Activated CD4-positive, alpha-beta T cell treated with anti-CD3 and anti-CD28 coated beads for 36 hours (primary cell): ENCODE measurements at regions of chr3 and their contacts with region 1.

Region 1: GRCh38 chr3:183188895-183189462 is 26.4 kb upstream of the LAMP3 start:
- DNase-seq: peak; percentile 56
- ATAC-seq: peak; percentile 33
- H3K4me3 Mint-ChIP-seq: no peak overlapping the region
- H3K27ac Mint-ChIP-seq: no peak overlapping the region
- H3K4me1 Mint-ChIP-seq: peaks cover 20% of the 10 kb centered on the region
- H3K27me3 Mint-ChIP-seq: no peaks in the 10 kb centered on the region

Region 2: GRCh38 chr3:183044547-183045229 is 144.3 kb before region 1 on chr3:
- CTCF ChIA-PET with region 1: no interaction called
- POLR2A ChIA-PET with region 1: no interaction called
- intact Hi-C with region 1: no loop called
- DNase-seq: no peak
- ATAC-seq: no peak
- H3K4me3 Mint-ChIP-seq: no peak overlapping the region
- H3K27ac Mint-ChIP-seq: no peak overlapping the region
- H3K4me1 Mint-ChIP-seq: no peaks in the 10 kb centered on the region
- H3K27me3 Mint-ChIP-seq: no peaks in the 10 kb centered on the region

Region 3: GRCh38 chr3:183122257-183122932 is 66.6 kb before region 1 on chr3:
- CTCF ChIA-PET with region 1: interaction called, 52 read pairs
- POLR2A ChIA-PET with region 1: no interaction called
- intact Hi-C with region 1: loop called (anchors 1 kb)
- DNase-seq: no peak
- ATAC-seq: peak; percentile 74
- H3K4me3 Mint-ChIP-seq: no peak overlapping the region
- H3K27ac Mint-ChIP-seq: no peak overlapping the region
- H3K4me1 Mint-ChIP-seq: peaks cover 10% of the 10 kb centered on the region
- H3K27me3 Mint-ChIP-seq: peaks cover 4% of the 10 kb centered on the region

Region 4: GRCh38 chr3:183252973-183253901 is 64.3 kb after region 1 on chr3 and contains the start of gene B3GNT5:
- CTCF ChIA-PET with region 1: interaction called, 11 read pairs
- POLR2A ChIA-PET with region 1: no interaction called
- intact Hi-C with region 1: loop called in 1 of 2 experiments (anchors 2 kb)
- DNase-seq: peak; percentile 76
- ATAC-seq: peak; percentile 56
- H3K4me3 Mint-ChIP-seq: peak within 1 kb of the TSS; percentile 77
- H3K27ac Mint-ChIP-seq: peak within 1 kb of the TSS; percentile 79
- H3K4me1 Mint-ChIP-seq: peaks cover 29% of the 10 kb centered on the region
- H3K27me3 Mint-ChIP-seq: peaks cover 14% of the 10 kb centered on the region
- total RNA-seq, gene B3GNT5: 20.2 to 22.8 TPM

Region 5: DNA sequence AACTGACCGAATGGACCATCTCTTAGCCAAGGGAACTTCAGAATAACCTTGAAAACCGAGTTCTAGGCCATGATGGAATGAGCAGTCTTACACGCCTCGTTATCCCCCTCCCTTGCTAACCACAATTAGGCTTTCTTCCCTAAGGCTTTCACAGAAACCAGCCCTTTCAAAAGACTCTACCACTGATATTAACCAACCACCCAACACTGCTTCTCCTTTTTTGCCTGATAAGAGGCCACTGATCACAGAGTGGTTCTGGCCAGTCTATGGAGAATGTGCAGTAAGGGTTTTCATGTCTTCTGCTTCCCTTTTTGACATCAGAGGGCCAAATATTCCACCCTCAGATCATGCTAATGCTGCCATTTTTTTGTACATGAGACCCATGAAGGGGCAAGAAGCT is 180.1 kb after region 1 on chr3:
- CTCF ChIA-PET with region 1: interaction called, 20 read pairs
- POLR2A ChIA-PET with region 1: no interaction called
- intact Hi-C with region 1: no loop called
- DNase-seq: no peak
- ATAC-seq: no peak
- H3K4me3 Mint-ChIP-seq: no peak overlapping the region
- H3K27ac Mint-ChIP-seq: no peak overlapping the region
- H3K4me1 Mint-ChIP-seq: peaks cover 34% of the 10 kb centered on the region
- H3K27me3 Mint-ChIP-seq: no peaks in the 10 kb centered on the region

Region 6: DNA sequence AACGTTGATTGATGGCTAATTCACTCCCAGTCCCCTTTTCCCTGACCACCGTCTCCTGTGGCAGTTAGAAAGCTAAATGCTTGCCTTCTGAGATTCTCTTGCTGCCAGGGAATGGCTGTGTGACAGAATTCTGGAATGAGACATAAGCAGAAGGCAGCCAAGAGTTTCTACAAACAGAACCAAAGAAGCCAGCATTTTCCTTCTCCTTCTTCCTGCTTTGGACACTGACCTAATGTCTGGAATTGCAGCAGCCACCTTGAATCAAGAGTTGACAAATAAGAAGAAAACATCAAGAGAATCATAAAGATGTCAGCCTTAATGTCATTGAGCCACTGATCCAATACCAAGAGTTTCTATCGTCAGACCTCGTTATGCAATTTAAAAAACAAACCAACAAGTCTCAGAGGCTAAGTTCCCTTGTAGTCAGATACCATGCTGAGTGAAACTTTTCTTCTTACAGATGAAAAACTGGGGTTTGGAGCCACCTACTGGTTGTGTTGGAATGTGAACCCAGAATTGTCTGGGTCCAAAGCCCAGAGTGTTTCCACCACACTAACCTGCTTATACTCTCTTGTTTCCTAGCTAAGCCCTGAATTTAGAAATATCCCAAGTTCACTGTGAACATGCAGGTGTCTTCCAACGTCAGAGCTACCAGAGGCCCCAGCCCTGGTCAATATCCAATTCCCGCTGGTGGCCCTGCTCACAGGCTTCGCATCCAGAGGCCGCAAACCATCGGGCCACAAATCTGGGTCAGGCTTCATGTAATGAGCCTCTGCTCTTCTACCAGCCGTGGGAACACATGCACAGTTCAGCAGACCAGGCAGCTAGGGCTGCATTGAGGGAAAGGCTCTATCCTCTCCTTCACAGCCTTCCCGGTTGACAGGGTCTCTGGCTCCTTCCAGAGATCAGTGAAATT is 197.0 kb after region 1 on chr3:
- CTCF ChIA-PET with region 1: interaction called, 257 read pairs
- POLR2A ChIA-PET with region 1: no interaction called
- intact Hi-C with region 1: loop called (anchors 1 kb)
- DNase-seq: peak; percentile 74
- ATAC-seq: peak; percentile 80
- H3K4me3 Mint-ChIP-seq: no peak overlapping the region
- H3K27ac Mint-ChIP-seq: no peak overlapping the region
- H3K4me1 Mint-ChIP-seq: peaks cover 14% of the 10 kb centered on the region
- H3K27me3 Mint-ChIP-seq: no peaks in the 10 kb centered on the region

Region 7: DNA sequence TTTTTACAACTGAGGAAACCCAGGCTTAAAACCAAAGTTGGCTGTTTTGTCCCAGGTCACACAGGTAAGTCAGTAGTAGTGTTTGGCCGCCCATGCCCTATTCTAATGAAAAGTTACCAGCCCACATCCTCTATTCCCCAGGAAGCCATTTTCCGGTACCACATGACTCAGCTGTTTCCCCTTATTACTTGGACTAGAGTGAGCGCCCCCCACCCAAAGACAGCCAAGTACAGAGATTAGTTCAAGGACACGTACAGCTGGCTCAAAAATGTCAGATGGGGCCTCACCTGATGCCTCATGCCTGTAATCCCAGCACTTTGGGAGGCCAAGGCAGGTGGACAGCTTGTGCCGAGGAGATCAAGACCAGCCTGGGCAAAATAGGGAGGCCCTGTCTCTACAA is 375.1 kb after region 1 on chr3:
- CTCF ChIA-PET with region 1: no interaction called
- POLR2A ChIA-PET with region 1: no interaction called
- intact Hi-C with region 1: no loop called
- DNase-seq: peak; percentile 45
- ATAC-seq: peak; percentile 72
- H3K4me3 Mint-ChIP-seq: no peak overlapping the region
- H3K27ac Mint-ChIP-seq: peak overlapping the region; percentile 9
- H3K4me1 Mint-ChIP-seq: peaks cover 9% of the 10 kb centered on the region
- H3K27me3 Mint-ChIP-seq: no peaks in the 10 kb centered on the region

Region 8: DNA sequence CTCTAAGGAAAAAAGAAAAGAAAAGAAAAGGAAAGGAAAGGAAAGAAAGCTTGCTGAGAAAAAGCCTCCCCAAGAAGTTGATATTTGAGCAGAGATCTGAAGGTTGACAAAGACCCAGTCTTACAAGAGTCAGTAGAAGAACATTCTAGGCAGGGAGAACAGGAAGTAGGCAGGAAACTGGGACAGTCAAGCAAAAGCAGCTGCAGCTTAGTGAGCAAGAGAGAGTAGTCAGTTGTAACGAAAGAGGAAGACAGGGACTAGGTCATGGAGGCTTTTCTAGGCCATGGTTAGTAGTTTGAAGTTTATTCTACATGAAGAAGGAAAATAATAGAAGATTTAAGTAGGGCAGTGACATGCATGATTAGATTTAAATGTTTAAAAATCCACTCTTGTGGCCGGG is 398.4 kb after region 1 on chr3:
- CTCF ChIA-PET with region 1: no interaction called
- POLR2A ChIA-PET with region 1: no interaction called
- intact Hi-C with region 1: no loop called
- DNase-seq: no peak
- ATAC-seq: no peak
- H3K4me3 Mint-ChIP-seq: no peak overlapping the region
- H3K27ac Mint-ChIP-seq: peak overlapping the region; percentile 77
- H3K4me1 Mint-ChIP-seq: peaks cover 52% of the 10 kb centered on the region
- H3K27me3 Mint-ChIP-seq: no peaks in the 10 kb centered on the region

Region 9: DNA sequence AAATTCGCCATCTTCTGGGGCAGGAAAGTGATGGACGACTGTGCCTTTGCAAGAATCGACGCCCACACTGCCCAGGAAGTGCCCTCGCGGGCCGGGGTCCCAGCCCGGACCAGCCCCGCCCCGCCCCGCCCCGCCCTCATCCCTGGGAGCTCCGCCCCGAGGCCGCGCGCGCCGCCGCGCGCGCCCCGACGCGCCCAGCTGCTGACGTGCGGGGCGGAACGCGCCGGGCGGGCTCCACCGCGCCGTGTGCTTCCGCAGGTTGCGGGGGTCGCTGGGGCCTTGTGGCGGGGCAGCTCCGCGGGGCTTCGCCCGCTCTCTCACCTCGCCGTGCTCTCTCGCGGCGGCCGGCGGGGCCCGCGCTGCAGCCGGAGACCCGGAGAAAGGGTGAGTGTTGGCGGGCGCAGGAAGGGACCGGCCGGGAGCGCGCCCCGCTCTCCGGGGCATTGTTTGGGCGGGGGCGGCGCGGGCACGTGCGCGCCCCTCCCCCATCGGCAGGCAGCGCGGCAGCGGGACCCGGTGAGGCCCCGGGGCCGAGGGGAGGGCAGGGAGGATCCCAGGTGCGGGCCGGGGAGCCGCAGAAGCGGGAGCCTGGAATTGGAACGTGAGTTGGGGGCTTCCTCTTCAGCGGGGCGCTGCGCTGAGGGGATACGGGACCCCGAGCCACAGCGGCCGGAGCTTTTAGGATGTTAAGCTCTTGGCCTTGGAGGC is 508.8 kb after region 1 on chr3 and contains the start of gene YEATS2:
- CTCF ChIA-PET with region 1: no interaction called
- POLR2A ChIA-PET with region 1: no interaction called
- intact Hi-C with region 1: no loop called
- DNase-seq: peak; percentile 91
- ATAC-seq: peak; percentile 81
- H3K4me3 Mint-ChIP-seq: peak within 1 kb of the TSS; percentile 91
- H3K27ac Mint-ChIP-seq: peak within 1 kb of the TSS; percentile 89
- H3K4me1 Mint-ChIP-seq: peaks cover 31% of the 10 kb centered on the region
- H3K27me3 Mint-ChIP-seq: no peaks in the 10 kb centered on the region
- total RNA-seq, gene YEATS2: 59.4 to 73.9 TPM

Region 10: GRCh38 chr3:183766745-183767606 is 578.0 kb after region 1 on chr3:
- CTCF ChIA-PET with region 1: interaction called, 5 read pairs
- POLR2A ChIA-PET with region 1: no interaction called
- intact Hi-C with region 1: loop called in 1 of 2 experiments (anchors 10 kb)
- DNase-seq: peak; percentile 85
- ATAC-seq: peak; percentile 95
- H3K4me3 Mint-ChIP-seq: no peak overlapping the region
- H3K27ac Mint-ChIP-seq: no peak overlapping the region
- H3K4me1 Mint-ChIP-seq: peaks cover 9% of the 10 kb centered on the region
- H3K27me3 Mint-ChIP-seq: no peaks in the 10 kb centered on the region